Activated CD4-positive, alpha-beta memory T cell treated with anti-CD3 and anti-CD28 coated beads for 36 hours (primary cell): ENCODE measurements at regions of chr16 and their contacts with region 1.

Region 1: DNA sequence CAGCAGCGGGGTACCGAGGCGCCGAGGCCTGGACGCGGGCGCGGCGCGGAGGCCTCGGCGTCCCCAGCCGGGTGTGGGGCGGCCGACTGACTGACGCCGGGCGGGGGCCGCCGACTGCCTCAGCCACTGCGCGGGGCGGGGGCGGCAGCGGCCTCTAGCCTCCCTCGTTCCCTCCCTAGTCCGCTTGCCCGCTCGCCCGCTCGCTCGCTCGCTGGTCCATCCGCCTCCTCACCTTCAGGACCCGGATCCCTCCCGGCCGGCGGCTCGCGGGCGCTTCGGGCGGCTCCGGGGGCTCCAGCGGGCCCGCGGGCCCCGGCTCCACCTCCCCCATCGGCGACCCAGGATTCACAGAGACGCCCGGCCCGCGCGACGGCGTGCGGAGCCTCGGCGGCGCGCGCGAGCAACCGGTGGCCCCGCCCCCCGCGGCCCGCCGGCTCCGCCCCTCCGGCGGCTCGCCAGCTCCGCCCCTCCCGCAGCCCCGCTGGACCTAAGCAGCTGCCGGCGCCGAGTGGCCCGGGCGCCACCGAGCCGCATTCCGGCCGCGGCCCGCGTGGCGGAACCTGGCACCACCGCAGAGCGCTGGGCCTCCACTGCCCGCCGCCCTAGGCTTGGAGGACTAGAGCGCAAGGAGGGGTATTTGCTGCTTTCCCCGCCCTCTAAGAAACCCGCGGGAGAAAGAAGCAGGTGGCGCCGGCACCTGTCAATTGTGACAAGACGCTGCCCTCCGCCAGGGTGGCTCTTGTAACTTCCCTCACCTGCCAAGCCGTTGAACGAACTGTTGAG is 773 bp downstream of the PHLPP2 start:
- DNase-seq: peak; percentile 83
- H3K4me3 Mint-ChIP-seq: peak overlapping the region; percentile 76
- H3K27ac Mint-ChIP-seq: no peak overlapping the region
- H3K4me1 Mint-ChIP-seq: peaks cover 15% of the 10 kb centered on the region
- H3K27me3 Mint-ChIP-seq: peaks cover 7% of the 10 kb centered on the region

Region 2: DNA sequence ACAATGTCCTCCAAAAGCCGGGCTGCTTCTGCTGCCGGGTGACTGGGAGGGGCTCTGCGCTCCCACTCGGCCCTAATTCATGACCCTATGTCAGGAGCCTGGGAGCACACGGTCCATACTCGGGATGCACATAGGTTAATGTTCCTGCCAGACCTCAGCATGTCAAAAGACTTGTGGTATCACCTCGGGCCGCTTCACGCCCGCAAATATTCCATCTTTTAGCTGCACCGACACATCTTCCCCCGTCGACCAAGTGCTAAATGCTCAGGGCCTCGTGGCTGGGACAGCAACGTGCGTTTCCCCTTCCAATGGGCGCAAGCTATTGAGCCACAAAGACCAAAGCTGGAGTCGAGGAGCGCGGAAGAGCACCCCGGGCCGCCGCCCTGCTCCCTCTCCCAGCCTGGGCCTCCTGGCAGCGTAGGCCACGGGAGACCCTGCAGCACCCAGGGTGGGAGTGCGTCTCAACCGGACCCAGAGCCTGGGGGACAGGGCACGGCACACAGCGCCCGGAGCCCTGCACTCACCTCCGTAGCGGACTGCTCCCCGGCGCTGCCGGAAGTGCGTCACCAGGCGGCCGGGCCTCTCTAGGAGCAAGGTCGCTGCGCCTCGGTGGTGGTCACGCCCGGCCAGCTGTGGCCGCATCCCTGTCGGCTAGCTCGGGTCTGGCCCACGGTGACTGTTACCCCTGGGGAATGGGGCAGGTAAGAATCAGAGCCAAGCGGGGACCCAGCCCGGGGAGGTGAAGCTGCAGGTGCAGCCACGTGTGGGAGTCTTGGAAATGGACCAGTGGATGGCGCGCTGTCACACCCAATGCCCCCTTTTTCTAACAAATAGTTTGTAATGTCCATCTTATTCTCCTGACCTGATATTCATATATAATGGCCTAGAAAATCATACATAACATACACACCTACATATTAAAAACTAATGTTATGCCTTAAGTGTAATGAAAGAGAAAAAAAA is 261.8 kb before region 1 on chr16 and contains the start of gene ZNF23:
- CTCF ChIA-PET with region 1: no interaction called
- POLR2A ChIA-PET with region 1: no interaction called
- intact Hi-C with region 1: loop called (anchors 10 kb)
- DNase-seq: peak; percentile 84
- H3K4me3 Mint-ChIP-seq: peak within 1 kb of the TSS; percentile 84
- H3K27ac Mint-ChIP-seq: peak within 1 kb of the TSS; percentile 77
- H3K4me1 Mint-ChIP-seq: peaks cover 18% of the 10 kb centered on the region
- H3K27me3 Mint-ChIP-seq: no peaks in the 10 kb centered on the region
- total RNA-seq, gene ZNF23: 5.7 to 8.5 TPM

Region 3: GRCh38 chr16:71564155-71564967 is 159.4 kb before region 1 on chr16:
- CTCF ChIA-PET with region 1: no interaction called
- POLR2A ChIA-PET with region 1: no interaction called
- intact Hi-C with region 1: loop called (anchors 1 kb)
- DNase-seq: no peak
- H3K4me3 Mint-ChIP-seq: peak overlapping the region; percentile 79
- H3K27ac Mint-ChIP-seq: peak overlapping the region; percentile 92
- H3K4me1 Mint-ChIP-seq: peaks cover 14% of the 10 kb centered on the region
- H3K27me3 Mint-ChIP-seq: no peaks in the 10 kb centered on the region

Region 4: DNA sequence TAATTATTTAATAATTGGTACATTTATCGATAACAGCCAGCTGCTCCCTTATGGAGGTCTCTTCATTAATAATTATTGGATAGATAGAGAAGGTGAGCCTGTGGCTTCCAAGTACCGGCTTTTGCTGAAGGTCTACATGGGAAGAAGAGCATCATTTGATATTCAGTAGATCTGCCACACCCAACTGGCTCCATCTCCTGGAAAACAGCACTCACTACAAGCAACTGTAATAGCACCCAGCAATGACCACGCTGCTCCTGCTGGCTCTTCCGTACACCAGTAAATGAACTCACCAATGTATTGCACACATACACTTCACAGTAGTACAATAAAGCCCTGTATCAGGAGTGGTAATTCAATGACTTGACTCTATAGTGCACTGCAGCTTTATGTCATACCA is 78.3 kb before region 1 on chr16:
- CTCF ChIA-PET with region 1: no interaction called
- POLR2A ChIA-PET with region 1: no interaction called
- intact Hi-C with region 1: no loop called
- DNase-seq: no peak
- H3K4me3 Mint-ChIP-seq: no peak overlapping the region
- H3K27ac Mint-ChIP-seq: no peak overlapping the region
- H3K4me1 Mint-ChIP-seq: no peaks in the 10 kb centered on the region
- H3K27me3 Mint-ChIP-seq: no peaks in the 10 kb centered on the region

Region 5: DNA sequence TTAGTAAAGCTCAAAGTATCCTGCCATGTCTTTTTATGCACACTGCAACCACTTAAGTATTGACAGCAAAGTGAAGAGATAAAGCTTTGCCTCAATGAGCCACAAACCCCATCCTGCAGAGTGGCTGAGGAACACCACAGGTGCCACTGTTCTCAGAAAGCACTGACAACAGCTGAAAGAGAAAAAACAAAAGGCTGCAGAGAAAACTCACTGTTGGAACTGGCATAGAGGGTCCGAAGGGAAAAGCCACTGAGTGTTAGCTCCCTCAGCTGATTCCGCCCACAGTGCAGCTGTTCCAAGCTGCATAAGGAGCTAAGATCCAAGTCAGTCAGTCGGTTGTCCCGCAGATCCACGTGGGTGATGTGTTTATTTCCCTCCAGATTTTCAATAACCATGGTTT is 47.5 kb before region 1 on chr16:
- CTCF ChIA-PET with region 1: no interaction called
- POLR2A ChIA-PET with region 1: no interaction called
- intact Hi-C with region 1: no loop called
- DNase-seq: no peak
- H3K4me3 Mint-ChIP-seq: no peak overlapping the region
- H3K27ac Mint-ChIP-seq: no peak overlapping the region
- H3K4me1 Mint-ChIP-seq: peaks cover 12% of the 10 kb centered on the region
- H3K27me3 Mint-ChIP-seq: no peaks in the 10 kb centered on the region

Region 6: DNA sequence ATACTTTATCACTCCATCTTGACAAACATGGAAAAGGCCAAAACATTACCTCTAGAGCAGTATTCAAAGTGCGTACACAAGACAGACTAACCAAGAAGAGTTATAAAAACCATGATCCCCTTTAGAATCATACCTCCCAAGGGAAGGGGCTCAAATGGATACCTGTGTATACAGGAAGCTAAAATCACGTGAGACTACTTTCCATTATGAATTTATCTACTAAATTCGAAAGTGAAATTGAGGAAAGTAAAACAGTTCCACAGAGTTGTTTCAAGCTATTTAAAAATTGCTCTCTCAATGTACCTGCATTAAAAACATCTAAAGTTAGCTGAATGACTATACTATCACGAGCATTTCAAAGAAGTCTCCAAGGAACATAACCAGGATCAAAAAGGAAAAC is 52.2 kb after region 1 on chr16:
- CTCF ChIA-PET with region 1: no interaction called
- POLR2A ChIA-PET with region 1: no interaction called
- intact Hi-C with region 1: no loop called
- DNase-seq: no peak
- H3K4me3 Mint-ChIP-seq: no peak overlapping the region
- H3K27ac Mint-ChIP-seq: peak overlapping the region; percentile 57
- H3K4me1 Mint-ChIP-seq: peaks cover 34% of the 10 kb centered on the region
- H3K27me3 Mint-ChIP-seq: no peaks in the 10 kb centered on the region

Region 7: DNA sequence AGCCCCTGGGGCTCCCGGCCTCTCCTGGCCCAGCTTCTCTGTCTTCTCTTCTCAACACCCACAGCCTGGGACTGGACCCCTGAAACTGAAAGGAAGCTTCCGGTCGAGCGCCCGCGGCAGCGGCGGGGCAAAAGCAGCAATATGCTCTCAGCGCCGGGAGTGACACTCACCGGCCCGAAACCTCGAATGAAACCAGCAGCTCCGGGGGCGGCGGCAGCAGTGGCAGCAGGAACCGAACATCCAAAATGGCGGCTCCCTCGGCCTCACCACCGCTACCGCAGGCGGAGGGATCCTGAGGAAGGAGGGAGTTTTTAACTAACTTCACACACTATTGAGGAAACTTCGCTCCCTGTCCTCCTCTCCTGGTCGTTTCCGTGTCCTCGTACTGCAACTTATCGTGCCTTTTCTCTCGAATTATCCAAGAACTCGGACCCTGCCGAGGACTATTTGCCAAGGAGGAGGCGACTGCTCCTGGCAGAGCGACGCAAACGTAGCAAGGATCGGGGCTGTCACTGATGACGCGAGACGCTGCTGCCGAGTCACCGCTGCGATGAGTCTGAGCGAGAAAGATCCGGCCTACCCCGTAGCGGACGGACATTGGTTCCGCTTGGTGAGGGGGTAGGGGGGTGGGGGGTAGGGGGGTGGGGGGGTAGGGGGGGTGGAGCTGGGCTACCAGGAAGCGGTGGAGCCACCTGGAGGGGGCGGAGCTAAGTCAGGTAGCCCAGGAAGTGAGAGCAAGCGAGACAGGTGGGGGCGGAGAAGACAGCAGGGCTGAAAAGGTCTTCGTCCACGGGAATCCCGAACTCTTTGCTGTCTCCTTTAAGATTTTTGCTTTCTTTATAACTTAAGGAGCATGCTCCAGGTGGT is 85.1 kb after region 1 on chr16 and contains the start of gene AP1G1:
- CTCF ChIA-PET with region 1: no interaction called
- POLR2A ChIA-PET with region 1: no interaction called
- intact Hi-C with region 1: loop called (anchors 2 kb)
- DNase-seq: peak; percentile 96
- H3K4me3 Mint-ChIP-seq: peak within 1 kb of the TSS; percentile 90
- H3K27ac Mint-ChIP-seq: peak within 1 kb of the TSS; percentile 99
- H3K4me1 Mint-ChIP-seq: peaks cover 38% of the 10 kb centered on the region
- H3K27me3 Mint-ChIP-seq: no peaks in the 10 kb centered on the region
- total RNA-seq, gene AP1G1: 65.9 to 66.9 TPM

Region 8: GRCh38 chr16:71894921-71895678 is 171.4 kb after region 1 on chr16 and contains the start of gene IST1:
- CTCF ChIA-PET with region 1: no interaction called
- POLR2A ChIA-PET with region 1: no interaction called
- intact Hi-C with region 1: loop called (anchors 1 kb)
- DNase-seq: peak; percentile 99
- H3K4me3 Mint-ChIP-seq: peak within 1 kb of the TSS; percentile 95
- H3K27ac Mint-ChIP-seq: peak within 1 kb of the TSS; percentile 97
- H3K4me1 Mint-ChIP-seq: peaks cover 27% of the 10 kb centered on the region
- H3K27me3 Mint-ChIP-seq: no peaks in the 10 kb centered on the region
- total RNA-seq, gene IST1: 191 to 192 TPM

Region 9: DNA sequence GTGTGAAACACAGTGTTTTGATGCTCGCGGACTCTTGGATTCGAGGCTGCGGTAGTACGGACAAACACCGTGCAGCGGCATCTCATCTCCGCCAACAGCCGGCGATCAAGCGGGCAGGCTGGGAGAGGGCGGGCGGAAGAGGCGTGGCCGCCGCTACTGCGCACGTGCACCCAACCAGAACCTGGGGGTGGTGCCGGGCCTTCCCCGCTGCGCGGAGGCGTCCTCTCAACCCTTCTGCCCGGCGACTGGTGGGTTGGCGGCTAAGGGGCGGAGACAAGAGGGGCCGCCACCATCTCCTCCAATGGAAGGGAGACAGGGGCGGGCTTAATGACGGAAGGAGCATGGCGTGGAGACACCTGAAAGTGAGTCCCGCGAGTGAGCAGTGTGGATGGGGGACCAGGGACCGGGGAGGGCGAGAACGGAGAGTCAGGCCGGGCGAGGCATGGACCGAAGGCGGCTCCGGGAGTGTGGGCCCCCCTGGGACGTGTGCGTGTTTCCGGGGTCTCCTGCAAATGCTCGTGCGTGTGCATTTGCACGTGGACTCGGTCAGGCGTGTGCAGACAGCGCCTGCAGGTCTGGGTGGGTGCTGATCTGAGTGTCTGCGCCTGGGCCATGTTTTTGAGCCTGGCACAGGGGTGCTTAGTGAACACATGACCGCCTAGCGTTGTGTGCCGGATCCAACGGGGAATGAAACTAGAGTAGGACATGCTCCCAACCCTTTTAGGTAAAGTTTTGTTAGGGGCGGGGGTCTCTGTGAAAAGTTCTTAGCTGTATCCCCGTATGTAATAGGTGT is 284.9 kb after region 1 on chr16 and contains the start of gene DHODH:
- CTCF ChIA-PET with region 1: no interaction called
- POLR2A ChIA-PET with region 1: no interaction called
- intact Hi-C with region 1: loop called (anchors 2 kb)
- DNase-seq: peak; percentile 99
- H3K4me3 Mint-ChIP-seq: peak within 1 kb of the TSS; percentile 91
- H3K27ac Mint-ChIP-seq: peak within 1 kb of the TSS; percentile 76
- H3K4me1 Mint-ChIP-seq: peaks cover 21% of the 10 kb centered on the region
- H3K27me3 Mint-ChIP-seq: no peaks in the 10 kb centered on the region
- total RNA-seq, gene DHODH: 16.9 to 18.6 TPM

Region 10: DNA sequence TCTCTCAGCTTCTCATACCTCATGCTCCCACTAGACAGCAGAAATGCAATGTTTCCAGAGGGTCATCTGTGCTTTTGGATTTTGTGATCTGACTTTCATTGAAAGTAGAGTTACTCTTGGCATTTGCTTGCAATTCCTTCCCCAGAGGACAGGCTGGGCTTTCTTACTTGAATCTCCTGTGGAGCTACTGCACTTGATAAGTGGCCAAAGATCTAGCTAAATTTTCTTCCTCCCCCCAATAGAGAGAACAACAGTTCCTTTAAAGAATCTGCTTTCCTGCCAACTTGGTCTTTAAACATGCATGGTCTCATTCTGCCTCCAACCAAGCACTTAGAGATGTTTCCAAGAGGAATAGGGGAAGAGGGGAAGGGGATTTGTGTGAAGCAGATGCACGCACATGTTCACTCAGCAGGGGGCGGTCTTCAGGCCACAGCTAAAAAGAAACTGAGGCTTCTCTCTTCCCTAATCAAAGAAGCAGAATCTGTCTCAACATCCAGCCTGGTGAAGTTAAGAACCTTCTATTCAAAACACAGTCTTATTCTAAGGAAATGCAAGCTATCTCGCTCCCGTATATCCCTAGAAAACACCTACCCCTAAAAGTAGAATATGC is 1094.6 kb after region 1 on chr16:
- CTCF ChIA-PET with region 1: no interaction called
- POLR2A ChIA-PET with region 1: no interaction called
- intact Hi-C with region 1: no loop called
- DNase-seq: no peak
- H3K4me3 Mint-ChIP-seq: no peak overlapping the region
- H3K27ac Mint-ChIP-seq: no peak overlapping the region
- H3K4me1 Mint-ChIP-seq: no peaks in the 10 kb centered on the region
- H3K27me3 Mint-ChIP-seq: peaks cover 2% of the 10 kb centered on the region